ENCODE measurements at regions of chr22 and their contacts with region 1.

Region 1: GRCh38 chr22:22787786-22788459 is 99.7 kb upstream of the IGLL5 start:
- DNase-seq: peak; percentile 59 to 85
- ATAC-seq: peak; percentile 45 to 70 (median 53)
- H3K4me3 ChIP-seq: no peak overlapping the region
- H3K4me3 Mint-ChIP-seq: peak overlapping the region; percentile 17
- H3K27ac ChIP-seq: peak overlapping the region; percentile 70
- H3K27ac Mint-ChIP-seq: peak overlapping the region; percentile 88 to 92
- H3K4me1 ChIP-seq: peaks cover 58% of the 10 kb centered on the region
- H3K4me1 Mint-ChIP-seq: peaks cover 58 to 67% of the 10 kb centered on the region in 2 donors
- H3K27me3 ChIP-seq: no peaks in the 10 kb centered on the region
- H3K27me3 Mint-ChIP-seq: no peaks in the 10 kb centered on the region
- CTCF ChIP-seq: peak; percentile 67

Region 2: GRCh38 chr22:22576244-22576988 is 211.5 kb before region 1 on chr22:
- intact Hi-C with region 1: no loop called
- DNase-seq: peak in 1 of 2 donors; percentile 47
- ATAC-seq: peak in 1 of 3 donors; percentile 53
- H3K4me3 ChIP-seq: no peak overlapping the region
- H3K4me3 Mint-ChIP-seq: no peak overlapping the region
- H3K27ac ChIP-seq: no peak overlapping the region
- H3K27ac Mint-ChIP-seq: no peak overlapping the region
- H3K4me1 ChIP-seq: no peaks in the 10 kb centered on the region
- H3K4me1 Mint-ChIP-seq: no peaks in the 10 kb centered on the region
- H3K27me3 ChIP-seq: no peaks in the 10 kb centered on the region
- H3K27me3 Mint-ChIP-seq: peaks cover 9 to 28% of the 10 kb centered on the region in 2 donors
- CTCF ChIP-seq: peak; percentile 55

Region 3: DNA sequence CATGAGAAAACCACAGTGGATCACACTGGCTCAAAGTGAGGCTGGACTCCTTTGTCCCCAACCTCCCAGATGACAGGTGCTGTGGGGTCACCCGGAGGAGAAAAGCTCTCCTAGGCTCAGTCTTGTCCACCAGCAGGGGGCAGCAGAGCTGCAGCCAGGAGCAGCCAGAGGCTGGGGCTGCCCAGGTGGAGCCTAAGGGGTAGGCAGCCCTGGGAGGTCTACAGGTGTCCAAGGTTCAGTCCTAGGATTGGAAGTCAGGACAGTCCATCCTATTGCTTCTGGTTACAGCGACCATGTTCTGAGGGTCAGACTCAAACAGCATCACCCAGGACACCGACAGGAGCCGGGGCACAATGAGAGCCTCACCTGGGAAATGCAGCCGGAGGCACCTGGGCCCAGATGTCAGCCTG is 22.1 kb after region 1 on chr22:
- intact Hi-C with region 1: loop called (anchors 2 kb)
- DNase-seq: peak in 1 of 2 donors; percentile 93
- ATAC-seq: peak in 1 of 3 donors; percentile 81
- H3K4me3 ChIP-seq: no peak overlapping the region
- H3K4me3 Mint-ChIP-seq: no peak overlapping the region
- H3K27ac ChIP-seq: no peak overlapping the region
- H3K27ac Mint-ChIP-seq: peak overlapping the region; percentile 14 to 45
- H3K4me1 ChIP-seq: peaks cover 46% of the 10 kb centered on the region
- H3K4me1 Mint-ChIP-seq: peaks cover 40 to 50% of the 10 kb centered on the region in 2 donors
- H3K27me3 ChIP-seq: no peaks in the 10 kb centered on the region
- H3K27me3 Mint-ChIP-seq: no peaks in the 10 kb centered on the region
- CTCF ChIP-seq: no peak

Region 4: DNA sequence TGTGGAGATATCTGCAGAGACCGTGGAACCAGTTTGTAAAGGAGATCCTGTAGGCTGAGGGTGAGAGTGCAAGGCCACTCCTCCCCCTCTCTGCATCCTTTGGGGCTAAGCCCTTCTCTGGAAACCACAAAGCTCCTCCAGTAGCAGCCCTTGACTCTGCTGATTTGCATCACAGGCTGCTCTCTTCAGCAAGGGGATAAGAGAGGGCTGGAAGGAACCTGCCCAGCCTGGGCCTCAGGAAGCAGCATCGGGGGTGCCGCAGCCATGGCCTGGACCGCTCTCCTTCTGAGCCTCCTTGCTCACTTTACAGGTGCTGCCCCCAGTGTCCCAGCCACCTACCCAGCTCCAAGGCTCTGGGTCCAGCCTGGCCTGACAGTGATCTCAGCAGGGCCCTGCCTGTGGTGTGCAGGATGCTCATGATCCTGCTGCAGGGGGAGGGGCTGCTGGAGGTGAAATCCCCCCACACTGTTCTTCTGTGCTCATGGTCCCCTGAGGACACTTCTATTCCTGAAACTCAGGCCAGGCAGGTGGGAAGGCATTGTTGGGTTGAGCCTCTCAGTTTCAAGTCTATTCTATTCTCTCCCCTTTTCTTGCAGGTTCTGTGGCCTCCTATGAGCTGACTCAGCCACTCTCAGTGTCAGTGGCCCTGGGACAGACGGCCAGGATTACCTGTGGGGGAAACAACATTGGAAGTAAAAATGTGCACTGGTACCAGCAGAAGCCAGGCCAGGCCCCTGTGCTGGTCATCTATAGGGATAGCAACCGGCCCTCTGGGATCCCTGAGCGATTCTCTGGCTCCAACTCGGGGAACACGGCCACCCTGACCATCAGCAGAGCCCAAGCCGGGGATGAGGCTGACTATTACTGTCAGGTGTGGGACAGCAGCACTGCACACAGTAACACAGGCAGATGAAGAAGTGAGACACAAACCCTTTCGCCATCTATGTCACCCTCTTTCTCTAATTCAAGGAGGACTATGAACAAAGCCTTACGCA is 31.2 kb after region 1 on chr22:
- intact Hi-C with region 1: loop called (anchors 5 kb)
- DNase-seq: peak in 1 of 2 donors; percentile 68
- ATAC-seq: peak; percentile 15 to 51 (median 37)
- H3K4me3 ChIP-seq: peak overlapping the region; percentile 28
- H3K4me3 Mint-ChIP-seq: peak overlapping the region; percentile 87
- H3K27ac ChIP-seq: peak overlapping the region; percentile 65
- H3K27ac Mint-ChIP-seq: peak overlapping the region; percentile 82 to 87
- H3K4me1 ChIP-seq: peaks cover 96% of the 10 kb centered on the region
- H3K4me1 Mint-ChIP-seq: peaks cover 98 to 99% of the 10 kb centered on the region in 2 donors
- H3K27me3 ChIP-seq: no peaks in the 10 kb centered on the region
- H3K27me3 Mint-ChIP-seq: no peaks in the 10 kb centered on the region
- CTCF ChIP-seq: no peak